ENCODE measurements at regions of chr9 and their contacts with region 1.

Region 1: DNA sequence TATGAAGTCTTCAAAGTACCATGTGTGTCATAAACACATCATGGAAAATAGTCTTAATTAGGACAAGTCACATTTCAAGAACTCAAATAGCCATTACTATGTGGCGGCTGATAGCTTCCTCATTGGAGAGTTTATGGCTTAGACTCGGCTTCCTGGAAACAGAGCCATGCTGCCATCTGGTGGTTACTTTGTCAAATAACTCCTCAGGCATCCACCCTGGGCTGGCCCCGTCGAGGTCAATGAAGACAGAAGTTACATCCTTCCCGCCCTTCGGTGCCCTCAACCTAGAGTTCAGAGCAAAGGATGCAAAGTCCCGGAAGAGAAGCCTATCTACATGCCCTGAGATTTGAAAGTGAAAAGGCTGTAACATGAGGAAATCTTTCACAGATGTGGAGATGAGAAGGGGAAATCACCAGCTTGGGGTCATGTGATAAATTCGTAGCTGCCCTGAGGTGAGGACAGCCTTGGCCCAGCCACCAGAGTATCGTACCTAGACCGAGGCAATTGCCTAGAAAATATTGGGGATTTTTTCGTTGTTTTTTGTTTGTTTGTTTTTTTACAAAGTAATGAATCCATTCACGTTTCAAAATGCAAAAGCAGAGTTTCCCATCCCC is 45.5 kb upstream of the ZNF169 start:
- DNase-seq: peak; percentile 40 to 82
- ATAC-seq: peak; percentile 90 to 97 (median 96)
- H3K4me3 ChIP-seq: no peak overlapping the region
- H3K27ac ChIP-seq: no peak overlapping the region
- H3K4me1 ChIP-seq: peaks cover 0 to 7% (median 0%) of the 10 kb centered on the region in 9 donors
- H3K27me3 ChIP-seq: peaks cover 0 to 6% (median 0%) of the 10 kb centered on the region in 7 donors
- CTCF ChIP-seq: peak; percentile 64 to 94 (median 89)

Region 2: GRCh38 chr9:94014065-94014654 is 199.5 kb before region 1 on chr9:
- intact Hi-C with region 1: loop called in 8 of 10 experiments (anchors 1 to 5 kb)
- DNase-seq: no peak
- ATAC-seq: peak in 1 of 8 donors; percentile 61
- H3K4me3 ChIP-seq: no peak overlapping the region
- H3K27ac ChIP-seq: no peak overlapping the region
- H3K4me1 ChIP-seq: peaks cover 0 to 16% (median 0%) of the 10 kb centered on the region in 9 donors
- H3K27me3 ChIP-seq: no peaks in the 10 kb centered on the region
- CTCF ChIP-seq: peak; percentile 14 to 74 (median 63)

Region 3: DNA sequence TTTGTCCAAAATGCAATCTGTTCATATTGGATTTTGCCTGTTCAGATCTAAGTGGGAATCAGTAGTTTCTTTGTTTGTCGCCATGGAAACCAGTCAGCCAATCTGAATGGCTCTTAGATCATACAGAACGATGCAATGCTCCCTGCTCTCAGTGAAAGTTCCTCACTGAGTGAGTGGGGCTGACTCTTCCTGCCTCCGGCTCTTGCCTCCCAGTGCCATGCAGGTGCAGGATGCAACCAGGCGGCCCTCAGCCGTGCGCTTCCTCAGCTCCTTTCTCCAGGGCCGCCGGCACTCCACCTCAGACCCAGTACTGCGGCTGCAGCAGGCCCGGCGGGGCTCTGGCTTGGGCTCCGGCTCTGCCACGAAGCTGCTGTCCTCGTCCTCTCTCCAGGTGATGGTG is 129.3 kb before region 1 on chr9 and contains the start of gene PTPDC1:
- intact Hi-C with region 1: loop called in 1 of 10 experiments (anchors 5 kb)
- DNase-seq: peak; percentile 11 to 54
- ATAC-seq: peak in 6 of 8 donors; percentile 43 to 58 (median 52)
- H3K4me3 ChIP-seq: peak within 1 kb of the TSS in 3 of 10 donors; percentile 4 to 40 (median 33)
- H3K27ac ChIP-seq: peak within 1 kb of the TSS in 5 of 10 donors; percentile 11 to 73 (median 56)
- H3K4me1 ChIP-seq: peaks cover 0 to 62% (median 32%) of the 10 kb centered on the region in 9 donors
- H3K27me3 ChIP-seq: no peaks in the 10 kb centered on the region
- CTCF ChIP-seq: no peak
- total RNA-seq, gene PTPDC1: 6.3 to 14.7 (median 9.5) TPM

Region 4: DNA sequence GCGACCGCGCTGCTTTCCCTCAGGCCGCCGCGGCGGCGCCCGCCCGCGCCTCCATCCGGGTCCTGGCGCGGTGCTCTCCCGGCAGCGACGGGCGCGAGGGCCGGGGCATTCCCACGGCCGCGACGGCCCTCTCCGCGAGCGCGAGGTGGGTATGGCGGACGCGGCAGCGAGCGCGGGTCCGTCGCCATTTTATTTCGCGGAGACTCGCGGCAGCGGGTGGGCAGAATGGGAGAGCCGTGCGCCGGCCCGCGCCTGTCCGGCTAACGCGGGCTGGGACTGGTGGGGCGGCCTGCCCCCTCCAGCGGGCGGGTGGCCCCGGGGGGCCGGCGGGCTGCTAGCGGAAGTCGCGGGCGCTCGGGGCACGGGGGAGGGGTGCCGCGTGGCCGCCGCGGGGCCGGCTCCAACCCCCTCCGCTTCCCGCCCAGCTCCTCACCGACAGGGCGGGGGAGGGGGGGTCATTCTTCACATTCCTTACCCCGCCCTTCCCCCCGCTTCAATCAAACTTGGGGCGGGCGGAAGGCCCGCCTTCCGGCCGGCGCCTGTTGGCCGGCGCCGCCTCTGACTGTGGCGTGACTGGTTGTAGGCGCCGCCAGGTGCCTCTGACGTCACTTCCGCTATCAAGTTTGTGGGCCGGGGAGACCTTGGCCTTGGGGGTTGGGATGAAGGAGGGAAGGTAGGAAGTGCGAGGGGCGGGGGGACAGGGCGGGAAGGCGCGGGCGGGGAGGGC is 47.2 kb before region 1 on chr9:
- intact Hi-C with region 1: loop called in 1 of 10 experiments (anchors 5 kb)
- DNase-seq: peak; percentile 96 to 99
- ATAC-seq: peak; percentile 80 to 92 (median 87)
- H3K4me3 ChIP-seq: peak overlapping the region; percentile 54 to 92 (median 75)
- H3K27ac ChIP-seq: peak overlapping the region; percentile 99 to 100 (median 100)
- H3K4me1 ChIP-seq: peaks cover 5 to 48% (median 38%) of the 10 kb centered on the region in 9 donors
- H3K27me3 ChIP-seq: no peaks in the 10 kb centered on the region
- CTCF ChIP-seq: peak in 5 of 9 donors; percentile 6 to 38 (median 29)

Measured in heart right ventricle (tissue), 16 donors.